ENCODE measurements at regions of chr19 and their contacts with region 1.

Region 1: DNA sequence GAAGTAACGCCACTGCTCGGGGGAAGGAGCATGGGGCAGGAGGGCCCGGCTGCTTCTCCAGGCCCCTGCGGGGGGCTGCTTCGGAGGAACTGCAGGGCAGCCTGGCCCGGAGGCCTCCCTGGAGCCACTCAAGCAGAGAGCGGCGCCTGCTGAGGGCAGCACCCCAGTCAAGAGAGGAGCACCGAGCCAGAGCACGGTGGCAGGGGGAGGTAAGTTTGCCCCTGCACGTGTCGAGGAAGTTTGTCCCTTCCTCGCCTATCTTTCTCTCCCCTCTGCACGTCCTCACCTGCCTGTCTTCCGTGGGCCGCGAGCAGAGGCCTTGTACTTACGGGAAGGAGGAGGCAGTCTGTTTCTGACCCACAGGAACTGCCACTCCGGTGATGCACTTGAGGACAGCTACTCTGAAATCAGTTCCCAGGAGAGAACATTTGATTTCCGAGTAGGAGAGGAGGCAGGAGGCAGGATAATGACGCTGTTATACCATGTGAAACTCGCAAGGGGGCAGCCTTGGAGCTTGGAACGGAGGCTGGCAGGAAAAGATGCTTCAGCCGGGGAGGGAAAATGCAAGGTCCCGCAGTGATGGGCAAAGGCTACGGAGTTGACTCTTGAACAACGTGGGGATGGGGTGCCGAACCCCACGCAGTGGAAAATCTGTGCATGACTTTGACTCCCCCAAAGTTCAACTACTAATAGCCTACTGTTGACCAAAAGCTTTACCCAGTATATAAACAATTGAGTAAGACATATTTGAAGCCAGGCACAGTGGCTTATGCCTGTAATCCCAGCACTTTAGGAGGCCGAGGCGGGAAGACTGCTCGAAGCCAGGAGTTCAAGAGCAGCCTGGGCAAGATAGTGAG is 5.0 kb downstream of the FFAR1 start:
- DNase-seq: peak; percentile 58 to 73 (median 59)
- ATAC-seq: peak; percentile 85
- H3K4me3 ChIP-seq: no peak overlapping the region
- H3K4me1 ChIP-seq: no peaks in the 10 kb centered on the region
- CTCF ChIP-seq: peak; percentile 31

Region 2: GRCh38 chr19:35495107-35496064 is 142.7 kb after region 1 on chr19:
- intact Hi-C with region 1: loop called in 1 of 2 experiments (anchors 10 kb)
- DNase-seq: peak; percentile 57 to 70 (median 69)
- ATAC-seq: peak; percentile 98
- H3K4me3 ChIP-seq: no peak overlapping the region
- H3K4me1 ChIP-seq: peaks cover 6% of the 10 kb centered on the region
- CTCF ChIP-seq: peak; percentile 99